ENCODE measurements at regions of chr22 and their contacts with region 1.

Region 1: DNA sequence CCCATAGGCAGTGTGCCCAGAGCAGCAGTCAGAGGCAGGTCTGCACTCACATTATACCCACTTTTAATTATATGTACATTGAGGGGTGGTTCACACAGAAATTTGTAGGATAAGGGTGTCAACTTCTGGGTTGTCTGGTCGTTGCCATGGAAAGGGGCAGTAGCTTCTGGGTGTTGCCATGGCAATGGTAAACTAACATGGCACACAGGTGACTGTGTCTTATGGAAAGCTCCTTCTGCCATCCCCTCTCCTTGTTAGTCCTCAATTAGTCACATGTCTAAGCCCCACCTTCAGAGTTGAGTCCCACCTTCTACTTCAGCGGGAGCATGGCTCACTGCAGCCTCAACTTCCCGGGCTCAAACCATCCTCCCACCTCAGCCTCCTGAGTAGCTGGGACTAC is 56.3 kb upstream of the ATXN10 start:
- DNase-seq: no peak

Region 2: DNA sequence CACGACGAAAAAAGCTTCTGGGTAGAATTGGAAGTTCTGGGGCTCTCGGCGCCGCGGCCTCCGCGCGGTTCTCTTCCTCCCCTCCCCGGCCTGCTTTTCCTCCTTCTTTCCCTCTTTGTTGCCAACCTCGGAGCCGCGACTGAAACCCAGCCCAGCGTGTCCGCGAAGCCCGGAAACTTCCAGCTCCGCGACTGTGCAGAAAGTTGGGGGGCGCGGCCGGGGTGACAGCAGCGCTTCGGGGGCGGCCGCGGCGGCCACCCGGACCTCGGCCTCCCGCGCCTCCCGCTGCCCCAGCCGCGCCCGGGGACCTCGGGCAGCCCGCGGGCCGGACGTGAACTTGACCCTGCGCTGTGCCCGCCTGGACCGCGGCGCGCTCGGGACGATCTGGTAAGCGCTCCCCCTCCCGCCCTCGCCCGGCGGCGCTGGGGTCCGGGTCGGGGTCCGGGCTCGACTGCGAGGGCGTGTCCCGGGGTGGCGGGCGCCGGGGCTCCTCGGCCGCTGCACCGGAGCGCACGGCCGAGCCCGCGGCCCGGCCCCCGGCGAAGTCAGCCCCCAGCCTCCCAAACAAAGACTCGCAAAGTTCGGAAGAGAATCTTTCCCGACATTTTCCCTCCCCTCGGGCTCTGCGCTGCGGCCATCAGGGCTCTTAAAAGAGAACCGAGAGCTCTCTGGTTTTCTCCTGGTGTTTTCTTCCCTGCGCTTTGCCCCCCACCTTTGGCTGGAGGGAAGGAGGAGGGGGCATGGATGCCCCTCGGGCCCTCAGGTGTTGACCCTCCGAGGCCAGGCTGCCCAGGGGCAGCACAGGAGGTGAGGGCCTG is 429.5 kb after region 1 on chr22:
- in situ Hi-C with region 1: no loop called
- DNase-seq: no peak

Region 3: GRCh38 chr22:47593911-47594311 is 1978.5 kb after region 1 on chr22:
- in situ Hi-C with region 1: loop called (anchors 5 kb)
- DNase-seq: no peak

Measured in KBM-7 (cell line).